ENCODE measurements at regions of chr7 and their contacts with region 1.

Region 1: DNA sequence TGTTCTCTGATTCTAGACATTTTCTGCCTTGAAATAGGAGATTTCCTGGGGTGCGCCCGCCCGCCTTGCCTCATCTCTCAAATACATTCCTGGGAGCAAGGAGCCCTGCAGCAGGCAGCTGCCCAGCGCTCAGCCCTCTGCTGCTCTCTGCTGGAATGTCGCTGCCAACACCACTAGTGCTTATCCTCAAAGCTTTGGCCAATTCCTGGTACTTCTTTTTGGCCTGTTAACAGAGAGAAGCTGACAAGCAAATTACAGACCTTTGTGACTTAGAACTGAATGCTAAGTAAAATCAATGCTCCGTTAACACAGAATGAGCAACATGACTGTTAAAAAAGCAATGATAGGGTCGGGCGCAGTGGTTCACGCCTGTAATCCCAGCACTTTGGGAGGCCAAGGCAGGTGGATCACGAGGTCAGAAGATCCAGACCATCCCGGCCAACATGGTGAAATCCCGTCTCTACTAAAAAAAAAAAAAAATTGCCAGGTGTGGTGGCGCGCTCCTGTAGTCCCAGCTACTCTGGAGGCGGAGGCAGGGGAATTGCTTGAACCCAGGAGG is 41.9 kb upstream of the SYPL1 start:
- DNase-seq: peak; percentile 89
- ATAC-seq: peak; percentile 97

Region 2: GRCh38 chr7:106056513-106057203 is 97.3 kb before region 1 on chr7:
- intact Hi-C with region 1: loop called (anchors 5 kb)
- DNase-seq: peak; percentile 77
- ATAC-seq: peak; percentile 89